Activated CD4-positive, alpha-beta T cell treated with anti-CD3 and anti-CD28 coated beads for 36 hours (primary cell): ENCODE measurements at regions of chr4 and their contacts with region 1.

Region 1: GRCh38 chr4:114791976-114792375 is 193.4 kb downstream of the UGT8 start:
- DNase-seq: no peak
- ATAC-seq: no peak
- H3K4me3 Mint-ChIP-seq: no peak overlapping the region
- H3K27ac Mint-ChIP-seq: no peak overlapping the region
- H3K4me1 Mint-ChIP-seq: no peaks in the 10 kb centered on the region
- H3K27me3 Mint-ChIP-seq: peaks cover 3% of the 10 kb centered on the region

Region 2: DNA sequence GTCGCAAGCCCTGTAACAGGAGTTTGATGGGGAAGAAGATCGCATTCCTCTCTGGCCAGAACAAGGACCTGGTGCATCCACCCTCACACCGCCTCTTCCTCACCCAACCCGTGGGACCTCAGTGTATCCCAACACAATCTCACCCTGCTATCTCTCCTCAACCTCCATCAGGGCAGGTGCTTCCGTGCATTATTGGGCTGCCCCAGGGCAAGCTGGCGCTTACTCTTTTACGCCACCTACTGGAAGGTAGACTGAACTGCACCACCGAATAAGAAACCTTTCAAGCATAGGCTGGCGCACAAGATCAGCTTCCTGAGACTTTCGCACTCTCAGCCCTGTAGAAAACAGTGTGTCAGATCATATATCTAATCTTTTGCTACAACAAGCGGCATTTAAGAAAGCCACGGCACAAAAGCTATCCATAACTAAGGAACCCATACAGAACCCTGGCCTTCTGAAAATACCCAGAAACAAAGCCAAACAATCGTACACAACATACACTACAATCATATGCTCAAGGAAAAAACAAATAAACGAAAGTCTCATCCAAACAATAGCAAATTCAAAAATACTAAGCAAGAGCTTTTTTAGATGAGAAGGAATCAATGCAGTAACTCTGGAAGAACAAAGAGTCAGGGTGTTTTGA is 15.9 kb after region 1 on chr4:
- CTCF ChIA-PET with region 1: interaction called, 10 read pairs
- POLR2A ChIA-PET with region 1: no interaction called
- intact Hi-C with region 1: no loop called
- DNase-seq: peak; percentile 51
- ATAC-seq: peak; percentile 88
- H3K4me3 Mint-ChIP-seq: no peak overlapping the region
- H3K27ac Mint-ChIP-seq: no peak overlapping the region
- H3K4me1 Mint-ChIP-seq: no peaks in the 10 kb centered on the region
- H3K27me3 Mint-ChIP-seq: peaks cover 8% of the 10 kb centered on the region